Activated CD4-positive, alpha-beta T cell treated with anti-CD3 and anti-CD28 coated beads for 36 hours (primary cell): ENCODE measurements at regions of chr19 and their contacts with region 1.

Region 1: GRCh38 chr19:18521885-18522624 is at the start of gene ELL:
- DNase-seq: peak; percentile 100
- ATAC-seq: peak; percentile 92
- H3K4me3 Mint-ChIP-seq: peak within 1 kb of the TSS; percentile 80
- H3K27ac Mint-ChIP-seq: peak within 1 kb of the TSS; percentile 93
- H3K4me1 Mint-ChIP-seq: peaks cover 14% of the 10 kb centered on the region
- H3K27me3 Mint-ChIP-seq: no peaks in the 10 kb centered on the region
- total RNA-seq, gene ELL: 20.2 to 21.4 TPM

Region 2: DNA sequence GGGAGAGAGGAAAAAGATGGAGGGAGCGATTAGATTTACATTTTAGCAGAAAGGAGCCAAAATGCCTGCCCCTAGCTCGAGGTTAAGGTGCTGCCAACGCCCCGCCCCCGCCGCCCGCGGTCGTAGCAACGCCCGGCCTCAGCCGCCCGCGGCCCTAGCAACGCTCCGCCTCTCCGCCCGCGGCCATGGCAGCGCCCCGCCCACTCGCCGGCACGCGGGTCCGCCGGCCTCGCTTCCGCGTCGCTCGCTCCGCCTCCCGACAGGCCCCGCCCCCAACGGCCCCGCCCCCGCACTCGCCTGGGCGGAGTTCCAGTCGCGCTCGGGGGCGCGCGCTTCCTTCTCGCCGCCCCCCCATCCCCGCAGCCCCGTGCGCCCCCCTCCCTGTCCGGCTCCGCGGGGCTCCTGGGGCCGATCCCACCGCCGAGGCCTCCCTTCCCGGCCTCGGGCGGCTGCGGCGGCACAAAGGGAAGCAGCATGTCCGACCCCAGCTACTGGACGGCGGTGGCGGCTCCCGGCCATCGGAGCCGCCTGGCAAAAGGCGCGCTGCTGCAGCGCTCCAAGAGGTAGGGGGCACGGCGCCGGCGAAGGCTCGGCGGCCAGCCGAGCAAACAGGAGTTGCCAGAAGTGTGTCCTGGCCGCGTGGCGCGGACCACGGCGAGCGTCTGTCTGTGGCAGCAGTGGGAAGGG is 404.2 kb before region 1 on chr19:
- CTCF ChIA-PET with region 1: no interaction called
- POLR2A ChIA-PET with region 1: no interaction called
- intact Hi-C with region 1: loop called in 1 of 2 experiments (anchors 1 kb)
- DNase-seq: peak; percentile 97
- ATAC-seq: peak; percentile 79
- H3K4me3 Mint-ChIP-seq: peak overlapping the region; percentile 74
- H3K27ac Mint-ChIP-seq: peak overlapping the region; percentile 84
- H3K4me1 Mint-ChIP-seq: peaks cover 35% of the 10 kb centered on the region
- H3K27me3 Mint-ChIP-seq: no peaks in the 10 kb centered on the region

Region 3: GRCh38 chr19:18469069-18469846 is 52.8 kb before region 1 on chr19:
- CTCF ChIA-PET with region 1: interaction called, 15 read pairs
- POLR2A ChIA-PET with region 1: interaction called, 3 read pairs
- intact Hi-C with region 1: loop called in 1 of 2 experiments (anchors 1 kb)
- DNase-seq: peak; percentile 83
- ATAC-seq: peak; percentile 71
- H3K4me3 Mint-ChIP-seq: no peak overlapping the region
- H3K27ac Mint-ChIP-seq: no peak overlapping the region
- H3K4me1 Mint-ChIP-seq: peaks cover 13% of the 10 kb centered on the region
- H3K27me3 Mint-ChIP-seq: no peaks in the 10 kb centered on the region

Region 4: DNA sequence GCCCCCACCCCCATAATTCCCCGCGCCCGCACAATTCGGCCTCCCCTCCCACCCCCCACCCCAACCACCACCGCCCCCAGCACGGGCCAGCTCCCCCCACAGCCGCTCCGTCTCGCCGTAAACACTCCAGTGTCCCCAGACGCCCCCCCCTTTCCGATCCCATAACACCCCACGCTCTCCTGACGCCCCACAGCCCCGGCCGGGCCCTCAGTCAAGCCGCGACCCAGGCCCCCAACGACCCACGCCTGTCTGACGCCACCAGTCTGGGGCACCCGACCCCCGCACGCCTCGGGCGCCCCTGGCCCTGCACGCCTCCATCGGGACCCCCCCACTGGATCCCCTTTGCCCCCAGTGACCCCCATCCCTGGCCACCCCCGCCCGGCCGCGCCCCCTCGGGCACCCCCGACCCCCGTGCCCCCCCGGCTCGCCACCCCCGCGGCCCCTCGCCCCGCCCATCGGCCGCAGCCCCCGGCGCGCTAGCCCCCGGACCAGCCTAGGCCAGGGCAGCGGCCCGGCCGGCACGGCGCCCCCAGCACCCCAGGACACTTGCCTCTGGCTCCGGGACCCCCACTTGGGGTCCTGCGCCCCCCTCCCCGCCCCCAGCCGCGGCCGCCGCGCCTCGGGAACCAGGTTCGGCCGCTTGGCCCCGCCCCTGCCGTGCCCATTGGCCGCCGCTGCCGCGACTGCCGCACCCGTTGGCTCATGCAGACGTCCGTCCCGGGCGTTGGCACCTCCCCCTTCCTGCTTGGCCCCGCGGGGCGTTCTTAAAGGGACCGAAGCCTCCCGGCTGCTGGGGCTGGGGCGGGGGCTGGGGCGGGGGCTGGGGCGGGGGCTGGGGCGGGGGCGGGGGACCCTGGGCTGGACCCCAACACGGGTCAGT is 21.1 kb after region 1 on chr19 and contains the start of gene FKBP8:
- CTCF ChIA-PET with region 1: interaction called, 5 read pairs
- POLR2A ChIA-PET with region 1: interaction called, 4 read pairs
- intact Hi-C with region 1: loop called (anchors 1 kb)
- DNase-seq: peak; percentile 98
- ATAC-seq: peak; percentile 92
- H3K4me3 Mint-ChIP-seq: peak within 1 kb of the TSS; percentile 92
- H3K27ac Mint-ChIP-seq: peak within 1 kb of the TSS; percentile 98
- H3K4me1 Mint-ChIP-seq: peaks cover 25% of the 10 kb centered on the region
- H3K27me3 Mint-ChIP-seq: no peaks in the 10 kb centered on the region
- total RNA-seq, gene FKBP8: 208 to 211 TPM

Region 5: DNA sequence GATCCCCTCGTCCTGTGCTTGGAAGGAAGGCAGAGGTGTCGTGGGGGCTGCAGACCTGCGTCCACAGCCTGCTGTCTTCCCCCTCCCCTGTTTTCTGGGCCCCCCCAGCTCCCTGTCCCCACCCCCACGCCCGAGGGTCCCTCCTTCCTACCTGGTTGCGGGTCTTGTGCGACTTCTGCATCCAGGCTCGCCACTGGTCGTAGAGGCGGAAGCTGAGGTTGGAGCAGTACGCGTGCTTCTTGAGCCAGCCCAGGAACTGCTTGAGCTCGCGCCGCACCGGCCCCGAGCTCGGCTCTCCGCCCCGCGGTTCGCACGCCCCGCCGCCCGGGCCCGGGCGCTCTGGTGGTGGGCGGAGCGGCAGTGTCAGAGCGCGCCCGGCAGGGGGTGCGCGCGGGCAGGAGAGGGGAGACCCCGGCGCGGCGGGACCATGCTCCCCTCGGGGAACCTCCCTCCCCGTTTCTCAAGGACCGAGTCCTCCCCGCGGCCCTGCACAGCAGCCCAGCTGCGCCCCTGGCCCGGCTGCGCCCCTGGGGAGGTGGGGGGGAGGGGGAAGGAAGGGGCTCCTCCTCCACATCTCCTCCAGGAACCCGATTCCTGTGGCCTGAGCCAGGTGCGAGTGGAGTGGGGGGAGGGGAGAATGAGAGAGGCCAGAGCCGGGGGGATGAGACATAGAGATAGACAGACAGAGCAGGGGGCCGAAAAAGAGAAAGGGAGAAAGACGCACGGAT is 72.2 kb after region 1 on chr19:
- CTCF ChIA-PET with region 1: interaction called, 13 read pairs
- POLR2A ChIA-PET with region 1: interaction called, 4 read pairs
- intact Hi-C with region 1: loop called (anchors 1 kb)
- DNase-seq: peak; percentile 87
- ATAC-seq: peak; percentile 72
- H3K4me3 Mint-ChIP-seq: peak overlapping the region; percentile 72
- H3K27ac Mint-ChIP-seq: peak overlapping the region; percentile 56
- H3K4me1 Mint-ChIP-seq: peaks cover 23% of the 10 kb centered on the region
- H3K27me3 Mint-ChIP-seq: peaks cover 3% of the 10 kb centered on the region

Region 6: DNA sequence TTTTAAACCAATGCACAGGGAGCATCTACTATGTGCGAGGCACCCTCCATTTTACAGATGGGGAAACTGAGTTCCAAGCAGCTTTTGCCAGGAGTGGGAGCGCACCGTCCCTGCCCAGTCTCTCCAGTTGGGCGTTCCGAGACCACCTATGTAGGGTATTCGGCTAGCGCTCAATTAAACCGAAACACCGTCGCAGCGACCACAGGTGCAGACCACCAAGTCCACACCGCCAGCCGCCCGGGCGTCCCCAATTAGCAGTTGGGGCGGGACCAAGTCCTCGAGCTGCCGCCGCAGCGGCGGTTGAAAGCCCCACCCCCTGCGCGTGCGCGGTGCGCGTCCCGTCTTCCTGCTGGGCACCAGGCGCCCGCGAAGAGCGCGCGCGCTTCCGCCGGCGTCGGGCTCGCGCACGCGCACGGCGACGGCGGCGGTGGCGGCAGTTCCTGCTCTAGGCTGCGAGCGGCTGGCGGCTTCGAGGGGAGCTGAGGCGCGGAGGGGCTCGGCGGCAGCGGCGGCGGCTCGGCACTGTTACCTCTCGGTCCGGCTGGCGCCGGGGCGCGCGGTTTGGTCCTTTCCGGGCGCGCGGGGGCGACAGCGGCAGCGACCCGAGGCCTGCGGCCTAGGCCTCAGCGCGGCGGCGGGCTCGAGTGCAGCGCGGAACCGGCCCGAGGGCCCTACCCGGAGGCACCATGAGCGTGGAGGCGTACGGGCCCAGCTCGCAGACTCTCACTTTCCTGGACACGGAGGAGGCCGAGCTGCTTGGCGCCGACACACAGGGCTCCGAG is 309.7 kb after region 1 on chr19 and contains the start of gene UPF1:
- CTCF ChIA-PET with region 1: no interaction called
- POLR2A ChIA-PET with region 1: no interaction called
- intact Hi-C with region 1: loop called in 1 of 2 experiments (anchors 1 kb)
- DNase-seq: peak; percentile 98
- ATAC-seq: peak; percentile 82
- H3K4me3 Mint-ChIP-seq: peak within 1 kb of the TSS; percentile 96
- H3K27ac Mint-ChIP-seq: peak within 1 kb of the TSS; percentile 90
- H3K4me1 Mint-ChIP-seq: peaks cover 34% of the 10 kb centered on the region
- H3K27me3 Mint-ChIP-seq: peaks cover 3% of the 10 kb centered on the region
- total RNA-seq, gene UPF1: 72.4 to 74.0 TPM

Region 7: DNA sequence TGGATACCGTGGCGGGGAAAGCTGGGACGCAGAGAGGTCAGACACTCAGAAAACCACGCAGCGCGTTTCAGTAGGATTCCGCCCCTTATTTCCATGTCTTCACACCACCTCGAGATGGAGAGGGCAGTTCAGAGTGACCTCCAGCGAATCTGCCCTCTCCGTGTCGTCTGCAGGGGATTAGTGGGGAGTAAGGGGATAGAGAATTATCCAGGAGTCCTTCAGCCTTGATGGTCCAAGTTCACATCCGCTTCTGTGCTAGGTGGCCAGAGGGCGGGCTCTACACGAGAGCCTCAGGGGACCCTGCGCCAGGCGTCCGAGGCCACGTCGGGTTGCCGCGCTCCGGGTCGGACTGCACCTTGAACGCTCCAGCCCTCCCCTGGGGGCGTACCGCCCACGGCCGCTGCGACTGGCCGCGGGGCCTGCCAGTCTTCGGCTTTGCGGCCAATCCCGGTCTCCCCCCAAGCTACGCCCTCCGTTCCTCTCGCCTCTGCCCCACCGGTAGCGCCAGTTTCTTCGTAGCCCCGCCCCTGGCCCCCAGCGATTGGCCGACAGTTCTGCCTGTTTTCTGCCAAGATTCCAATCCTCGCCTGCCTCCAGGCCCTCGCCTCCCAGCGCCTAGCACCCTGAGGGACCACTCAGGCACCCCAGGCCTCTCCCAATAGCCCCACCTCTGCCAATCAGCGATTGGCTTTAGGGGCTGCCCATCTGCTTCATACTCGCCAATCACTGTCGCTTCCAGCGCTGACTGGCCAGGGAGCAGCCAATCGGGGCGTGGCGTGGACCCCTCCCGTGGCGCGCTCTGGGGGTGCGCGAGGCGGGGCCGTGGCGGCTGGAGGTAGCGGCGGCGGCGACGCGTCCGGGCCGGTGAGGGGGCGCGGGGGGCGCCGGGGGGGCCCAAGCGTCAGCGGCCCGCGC is 541.4 kb after region 1 on chr19 and contains the start of gene SLC25A42:
- CTCF ChIA-PET with region 1: no interaction called
- POLR2A ChIA-PET with region 1: no interaction called
- intact Hi-C with region 1: loop called in 1 of 2 experiments (anchors 1 kb)
- DNase-seq: peak; percentile 99
- ATAC-seq: peak; percentile 96
- H3K4me3 Mint-ChIP-seq: peak within 1 kb of the TSS; percentile 75
- H3K27ac Mint-ChIP-seq: peak within 1 kb of the TSS; percentile 85
- H3K4me1 Mint-ChIP-seq: peaks cover 34% of the 10 kb centered on the region
- H3K27me3 Mint-ChIP-seq: no peaks in the 10 kb centered on the region
- total RNA-seq, gene SLC25A42: 10.4 to 10.6 TPM